Transverse colon (tissue), 4 donors: ENCODE measurements at regions of chr10 and their contacts with region 1.

Region 1: DNA sequence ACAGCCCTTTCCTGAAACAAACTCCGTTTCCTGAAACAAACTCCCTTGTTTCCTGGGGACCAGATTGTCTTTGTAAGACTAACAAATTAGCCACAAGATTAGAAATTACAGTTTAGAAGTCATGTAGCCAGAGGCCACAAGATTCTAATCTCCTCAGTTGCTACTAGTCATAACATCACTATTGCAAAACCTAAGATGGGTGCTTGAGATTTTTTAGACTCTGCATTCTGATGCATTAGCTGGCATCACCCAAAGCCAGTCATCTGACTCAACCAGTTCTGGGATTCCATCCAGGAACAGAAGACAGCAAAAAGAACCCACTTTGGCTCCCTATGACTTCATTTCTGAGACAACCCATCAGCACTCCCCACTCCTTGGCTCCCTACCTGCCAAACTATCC is 367.9 kb upstream of the MBL2 start:
- DNase-seq: no peak
- H3K4me3 ChIP-seq: no peak overlapping the region
- H3K27ac ChIP-seq: no peak overlapping the region
- H3K4me1 ChIP-seq: no peaks in the 10 kb centered on the region
- H3K27me3 ChIP-seq: no peaks in the 10 kb centered on the region
- CTCF ChIP-seq: no peak
- EP300 ChIP-seq: no peak
- POLR2A ChIP-seq: no peak

Region 2: DNA sequence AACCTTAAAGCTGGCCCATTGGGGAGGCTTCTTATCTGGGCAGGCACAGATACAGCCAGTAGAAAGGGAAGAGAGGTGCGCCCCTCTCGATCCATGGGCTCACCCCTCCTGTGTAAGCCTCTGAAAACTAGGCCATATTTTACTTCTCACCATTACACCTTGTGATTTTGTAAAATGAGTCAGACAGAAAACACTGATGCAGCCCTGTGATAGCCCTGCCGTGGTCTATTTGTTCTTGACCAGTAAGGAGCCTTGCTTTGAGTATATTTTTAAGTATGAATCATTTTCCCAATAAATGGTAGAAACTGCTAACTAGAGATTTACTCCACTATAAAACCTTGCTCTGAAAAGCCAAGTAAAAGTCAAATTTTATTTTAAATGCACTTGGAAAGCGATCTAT is 38.1 kb before region 1 on chr10:
- in situ Hi-C with region 1: no loop called
- intact Hi-C with region 1: loop called (anchors 1 kb)
- DNase-seq: no peak
- H3K4me3 ChIP-seq: no peak overlapping the region
- H3K27ac ChIP-seq: no peak overlapping the region
- H3K4me1 ChIP-seq: no peaks in the 10 kb centered on the region
- H3K27me3 ChIP-seq: no peaks in the 10 kb centered on the region
- CTCF ChIP-seq: no peak
- EP300 ChIP-seq: no peak
- POLR2A ChIP-seq: no peak

Region 3: DNA sequence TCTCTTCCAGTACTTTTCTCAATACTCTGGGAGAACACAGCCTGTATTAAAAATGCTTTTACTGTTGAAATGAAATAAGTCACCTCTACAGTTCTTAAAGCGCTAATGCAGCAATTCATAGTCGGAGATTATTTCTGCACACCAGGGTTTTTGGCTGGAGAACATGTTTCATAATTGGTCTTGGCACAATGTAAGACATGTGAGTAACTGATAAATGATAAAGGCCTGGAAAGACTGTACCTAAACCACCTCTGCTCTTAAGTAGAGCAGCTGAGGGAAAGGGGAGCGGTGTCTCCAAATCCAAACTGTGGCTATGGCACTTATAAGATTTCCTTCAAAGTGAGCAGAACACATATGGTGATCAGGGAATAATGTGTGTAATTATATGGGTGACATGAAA is 22.4 kb after region 1 on chr10:
- in situ Hi-C with region 1: no loop called
- intact Hi-C with region 1: no loop called
- DNase-seq: no peak
- H3K4me3 ChIP-seq: no peak overlapping the region
- H3K27ac ChIP-seq: no peak overlapping the region
- H3K4me1 ChIP-seq: no peaks in the 10 kb centered on the region
- H3K27me3 ChIP-seq: no peaks in the 10 kb centered on the region
- CTCF ChIP-seq: no peak
- EP300 ChIP-seq: no peak
- POLR2A ChIP-seq: no peak